ENCODE measurements at regions of chr12 and their contacts with region 1.

Region 1: DNA sequence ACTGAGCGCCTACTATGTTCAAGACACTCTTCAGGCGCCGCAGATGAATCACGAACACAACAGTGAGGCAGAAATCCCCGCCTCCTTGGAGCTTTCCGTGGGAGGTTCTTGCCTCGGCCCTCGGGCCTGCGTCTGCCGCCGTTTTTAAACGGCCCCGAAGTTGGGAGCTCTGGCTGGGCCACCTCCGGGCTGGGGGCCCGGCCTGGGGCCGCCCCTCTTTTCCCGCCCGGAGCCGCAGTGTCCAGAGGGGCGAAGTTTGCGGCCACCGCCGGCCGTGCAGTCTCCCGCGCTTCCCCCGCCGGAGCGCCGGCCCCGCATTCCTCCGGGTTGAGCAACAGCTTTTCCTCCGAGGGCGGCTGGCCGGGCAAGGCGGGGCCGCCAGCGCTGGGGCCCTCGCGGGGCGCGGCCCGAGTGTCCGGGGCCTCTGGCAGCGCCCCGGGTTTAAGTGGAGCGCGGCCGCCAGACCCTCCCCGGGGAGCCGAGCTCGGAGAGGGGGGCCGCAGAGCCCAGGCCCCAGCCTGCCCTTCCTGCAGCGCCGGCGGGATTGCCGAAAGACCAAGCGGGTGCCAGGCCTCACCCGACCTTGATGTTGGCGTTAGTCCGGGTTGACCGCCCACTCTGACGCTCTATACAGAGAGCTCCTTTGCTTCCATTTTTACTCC is 18.7 kb upstream of the CTDSP2 start:
- DNase-seq: peak; percentile 79 to 94
- H3K4me3 ChIP-seq: peak overlapping the region; percentile 59 to 65
- H3K27ac ChIP-seq: peak overlapping the region; percentile 91
- H3K4me1 ChIP-seq: peaks cover 0 to 41% (median 29%) of the 10 kb centered on the region in 4 donors
- H3K27me3 ChIP-seq: no peaks in the 10 kb centered on the region
- CTCF ChIP-seq: no peak

Region 2: DNA sequence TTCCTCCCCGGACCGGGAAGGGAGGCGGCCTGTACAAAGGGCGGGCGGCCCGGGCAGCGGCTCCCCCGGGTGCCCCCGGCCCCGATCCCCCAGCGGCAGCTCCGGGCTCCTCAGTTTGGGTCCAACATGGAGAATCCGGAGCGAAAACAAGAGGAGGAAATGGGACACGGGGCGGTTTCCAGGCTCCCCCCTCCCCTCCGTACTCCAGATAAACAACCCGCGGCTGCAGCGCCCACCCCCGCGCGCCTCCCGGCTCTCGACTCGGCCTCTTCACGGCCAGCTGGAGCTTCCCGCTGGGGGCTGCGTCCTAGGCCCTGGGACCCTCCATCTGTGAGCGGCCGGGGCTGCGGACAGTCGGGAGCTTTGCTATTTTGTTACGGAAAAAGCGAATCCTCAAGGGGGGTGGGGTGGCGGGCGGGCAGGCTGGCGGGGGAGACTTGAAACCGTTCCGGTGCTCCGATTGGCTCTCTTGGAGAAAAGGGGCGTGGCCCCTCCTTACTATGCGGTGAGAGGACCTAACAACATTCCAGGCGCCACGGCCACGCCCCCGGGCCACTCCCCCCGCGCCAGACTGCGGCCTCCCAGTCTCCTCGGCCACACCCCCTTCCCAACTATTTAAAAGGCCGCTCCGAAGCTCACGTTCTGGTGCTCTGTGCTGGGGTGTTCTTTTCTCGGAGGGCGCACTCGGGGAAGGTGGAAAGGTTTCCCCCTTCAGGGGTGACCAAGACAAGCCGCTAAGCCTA is 18.5 kb before region 1 on chr12 and contains the start of gene CTDSP2:
- intact Hi-C with region 1: loop called (anchors 1 kb)
- DNase-seq: peak; percentile 100
- H3K4me3 ChIP-seq: peak within 1 kb of the TSS; percentile 97 to 100
- H3K27ac ChIP-seq: peak within 1 kb of the TSS; percentile 100
- H3K4me1 ChIP-seq: peaks cover 0 to 56% (median 47%) of the 10 kb centered on the region in 4 donors
- H3K27me3 ChIP-seq: no peaks in the 10 kb centered on the region
- CTCF ChIP-seq: peak; percentile 11 to 21